Transverse colon (tissue), 4 donors: ENCODE measurements at regions of chrX and their contacts with region 1.

Region 1: GRCh38 chrX:66437719-66438118 is 201.2 kb downstream of the EDA2R start:
- DNase-seq: no peak
- H3K4me3 ChIP-seq: no peak overlapping the region
- H3K27ac ChIP-seq: no peak overlapping the region
- H3K4me1 ChIP-seq: no peaks in the 10 kb centered on the region
- H3K27me3 ChIP-seq: no peaks in the 10 kb centered on the region
- CTCF ChIP-seq: no peak
- EP300 ChIP-seq: no peak
- POLR2A ChIP-seq: no peak

Region 2: GRCh38 chrX:66615655-66616054 is 177.9 kb after region 1 on chrX:
- in situ Hi-C with region 1: no loop called
- intact Hi-C with region 1: no loop called
- DNase-seq: no peak
- H3K4me3 ChIP-seq: no peak overlapping the region
- H3K27ac ChIP-seq: no peak overlapping the region
- H3K4me1 ChIP-seq: no peaks in the 10 kb centered on the region
- H3K27me3 ChIP-seq: no peaks in the 10 kb centered on the region
- CTCF ChIP-seq: no peak
- EP300 ChIP-seq: no peak
- POLR2A ChIP-seq: no peak

Region 3: DNA sequence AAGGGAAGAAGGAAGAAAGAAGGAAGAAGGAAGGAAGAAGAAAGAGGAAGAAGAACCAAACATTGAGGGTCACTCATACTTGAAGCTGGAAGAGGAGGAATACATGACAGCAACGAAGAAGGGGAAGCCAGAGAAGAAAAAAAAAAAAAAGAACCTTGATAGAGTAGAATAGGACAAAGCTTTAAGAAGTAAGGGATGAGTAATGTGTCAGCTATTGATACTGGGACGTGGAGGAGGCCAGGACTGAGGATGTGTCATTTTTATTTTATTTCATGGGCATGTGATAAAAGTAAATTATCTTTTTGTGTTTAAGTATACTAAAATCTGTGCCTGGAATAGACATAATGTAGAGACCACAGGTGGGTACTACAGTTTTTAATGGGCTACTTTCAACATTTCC is 194.8 kb after region 1 on chrX:
- in situ Hi-C with region 1: no loop called
- intact Hi-C with region 1: no loop called
- DNase-seq: no peak
- H3K4me3 ChIP-seq: no peak overlapping the region
- H3K27ac ChIP-seq: no peak overlapping the region
- H3K4me1 ChIP-seq: no peaks in the 10 kb centered on the region
- H3K27me3 ChIP-seq: no peaks in the 10 kb centered on the region
- CTCF ChIP-seq: no peak
- EP300 ChIP-seq: no peak
- POLR2A ChIP-seq: no peak

Region 4: GRCh38 chrX:67614414-67614813 is 1176.7 kb after region 1 on chrX:
- in situ Hi-C with region 1: no loop called
- intact Hi-C with region 1: loop called (anchors 5 kb)
- DNase-seq: no peak
- H3K4me3 ChIP-seq: no peak overlapping the region
- H3K27ac ChIP-seq: no peak overlapping the region
- H3K4me1 ChIP-seq: no peaks in the 10 kb centered on the region
- H3K27me3 ChIP-seq: no peaks in the 10 kb centered on the region
- CTCF ChIP-seq: no peak
- EP300 ChIP-seq: no peak
- POLR2A ChIP-seq: no peak

Region 5: DNA sequence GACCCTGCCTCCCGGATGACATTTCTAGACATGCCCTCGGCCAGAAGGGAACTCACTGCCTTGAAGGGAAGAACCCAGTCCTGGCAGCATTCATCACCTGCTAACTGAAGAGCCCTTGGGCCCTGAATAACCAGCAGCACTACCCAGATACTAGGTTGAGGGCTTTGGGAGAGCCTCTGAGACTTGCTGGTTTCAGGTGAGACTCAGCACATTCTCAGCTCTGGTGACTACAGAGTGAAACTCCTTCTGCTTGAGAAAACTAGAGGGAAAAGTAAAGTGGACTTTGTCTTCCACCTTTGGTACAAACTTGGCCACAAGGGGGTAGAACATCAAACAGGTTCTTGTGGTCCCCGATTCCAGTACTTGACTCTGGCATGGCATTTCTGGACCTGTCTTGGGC is 1580.5 kb after region 1 on chrX:
- in situ Hi-C with region 1: no loop called
- intact Hi-C with region 1: no loop called
- DNase-seq: no peak
- H3K4me3 ChIP-seq: no peak overlapping the region
- H3K27ac ChIP-seq: no peak overlapping the region
- H3K4me1 ChIP-seq: no peaks in the 10 kb centered on the region
- H3K27me3 ChIP-seq: no peaks in the 10 kb centered on the region
- CTCF ChIP-seq: no peak
- EP300 ChIP-seq: no peak
- POLR2A ChIP-seq: no peak